Sigmoid colon (tissue), 7 donors: ENCODE measurements at regions of chr5 and their contacts with region 1.

Region 1: GRCh38 chr5:173887610-173888472 is at the start of gene CPEB4:
- DNase-seq: peak; percentile 100
- H3K4me3 ChIP-seq: peak within 1 kb of the TSS; percentile 72 to 97 (median 89)
- H3K27ac ChIP-seq: peak within 1 kb of the TSS; percentile 79 to 91 (median 86)
- H3K4me1 ChIP-seq: peaks cover 0 to 44% (median 24%) of the 10 kb centered on the region in 4 donors
- H3K27me3 ChIP-seq: no peaks in the 10 kb centered on the region
- CTCF ChIP-seq: no peak
- EP300 ChIP-seq: peak in 2 of 4 donors; percentile 24 to 42
- POLR2A ChIP-seq: peak; percentile 97 to 99
- total RNA-seq, gene CPEB4: 27.8 to 66.2 (median 32.0) TPM

Region 2: GRCh38 chr5:173315495-173316350 is 572.1 kb before region 1 on chr5:
- intact Hi-C with region 1: loop called (anchors 10 kb)
- DNase-seq: peak; percentile 86
- H3K4me3 ChIP-seq: peak overlapping the region in 3 of 4 donors; percentile 10 to 20 (median 11)
- H3K27ac ChIP-seq: peak overlapping the region; percentile 47 to 75 (median 57)
- H3K4me1 ChIP-seq: peaks cover 0 to 53% (median 48%) of the 10 kb centered on the region in 4 donors
- H3K27me3 ChIP-seq: no peaks in the 10 kb centered on the region
- CTCF ChIP-seq: no peak
- EP300 ChIP-seq: no peak
- POLR2A ChIP-seq: no peak

Region 3: DNA sequence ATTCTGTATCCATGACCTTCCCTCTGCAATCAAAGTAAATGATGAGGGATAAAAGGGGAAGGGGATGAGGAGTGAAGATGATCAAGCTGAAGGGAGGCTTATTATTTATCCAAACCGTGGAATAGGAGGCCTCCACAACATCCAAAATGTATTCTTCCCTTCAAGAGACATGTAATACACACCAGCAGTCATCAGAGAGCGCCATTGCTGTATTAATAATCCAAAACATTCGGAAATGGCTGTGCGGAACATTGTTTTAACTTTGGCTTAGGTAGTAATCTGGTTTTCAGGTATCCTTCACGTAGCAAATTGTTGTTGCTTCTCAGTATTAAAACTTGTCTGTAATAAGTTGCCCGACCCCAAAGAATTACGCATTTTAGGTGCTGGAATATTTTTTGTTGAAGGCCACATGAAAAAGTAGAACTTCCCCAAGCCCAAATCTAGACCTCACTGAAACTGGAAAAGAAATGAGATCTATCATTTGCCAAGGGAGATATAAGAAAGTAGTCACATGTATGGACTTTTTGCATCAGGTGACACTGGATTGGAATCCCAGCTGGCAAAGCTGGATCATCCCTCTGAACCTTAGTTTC is 268.8 kb before region 1 on chr5:
- intact Hi-C with region 1: loop called (anchors 2 kb)
- DNase-seq: no peak
- H3K4me3 ChIP-seq: no peak overlapping the region
- H3K27ac ChIP-seq: no peak overlapping the region
- H3K4me1 ChIP-seq: peaks cover 0 to 22% (median 22%) of the 10 kb centered on the region in 4 donors
- H3K27me3 ChIP-seq: no peaks in the 10 kb centered on the region
- CTCF ChIP-seq: peak; percentile 66 to 79 (median 68)
- EP300 ChIP-seq: no peak
- POLR2A ChIP-seq: no peak

Region 4: DNA sequence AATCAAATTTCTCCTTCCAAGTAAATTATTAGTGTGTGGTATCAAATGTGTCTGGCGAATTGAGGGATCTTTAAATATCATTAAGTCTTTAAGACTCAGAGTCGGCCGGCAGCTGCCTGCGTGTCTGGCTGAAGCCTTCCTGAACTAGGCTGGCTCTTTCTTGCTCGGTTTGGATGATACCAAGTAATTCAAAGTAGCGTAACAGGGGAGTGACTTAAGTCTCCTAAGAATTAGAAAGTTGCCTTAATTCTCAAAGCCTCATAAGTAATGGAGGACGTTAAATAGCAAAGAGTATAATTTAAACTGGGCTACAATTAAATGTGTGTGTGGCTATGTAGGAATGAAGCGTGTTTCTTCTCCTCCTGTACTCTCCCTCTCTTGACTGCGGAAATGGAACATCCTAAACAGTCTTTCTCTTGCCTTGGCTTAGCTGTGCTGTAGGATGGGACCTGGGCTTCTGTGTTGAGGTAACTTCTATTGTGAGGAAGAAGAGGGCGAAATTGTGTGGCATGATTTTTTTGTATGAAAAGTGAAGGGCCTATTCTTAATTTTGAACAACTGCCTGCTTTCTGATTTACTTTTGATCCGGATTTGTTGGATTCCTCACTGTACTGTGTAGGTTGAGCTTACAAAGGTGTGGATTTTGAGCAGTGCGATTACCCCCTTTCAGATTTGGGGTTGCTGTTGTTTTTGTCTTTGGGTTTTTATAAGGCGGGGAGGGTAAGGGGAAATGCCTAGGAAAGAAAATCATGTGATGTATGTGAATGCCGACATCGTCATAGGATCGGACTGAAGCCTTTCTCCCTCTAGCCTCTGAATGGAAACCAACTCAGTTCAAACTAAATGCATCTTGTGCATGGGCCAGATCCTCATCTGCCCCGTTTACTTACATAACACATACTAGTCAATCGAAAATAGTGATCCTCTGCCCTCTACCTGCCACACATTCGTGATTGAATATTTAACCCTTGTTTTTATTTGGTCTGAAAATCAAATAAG is 30.2 kb after region 1 on chr5:
- intact Hi-C with region 1: loop called (anchors 2 kb)
- DNase-seq: peak; percentile 79
- H3K4me3 ChIP-seq: peak overlapping the region; percentile 41 to 55 (median 51)
- H3K27ac ChIP-seq: peak overlapping the region; percentile 85 to 91 (median 88)
- H3K4me1 ChIP-seq: peaks cover 0 to 73% (median 48%) of the 10 kb centered on the region in 4 donors
- H3K27me3 ChIP-seq: no peaks in the 10 kb centered on the region
- CTCF ChIP-seq: no peak
- EP300 ChIP-seq: no peak
- POLR2A ChIP-seq: peak in 1 of 2 donors; percentile 62

Region 5: GRCh38 chr5:173954671-173955521 is 67.1 kb after region 1 on chr5:
- intact Hi-C with region 1: loop called (anchors 5 kb)
- DNase-seq: peak; percentile 74
- H3K4me3 ChIP-seq: no peak overlapping the region
- H3K27ac ChIP-seq: peak overlapping the region; percentile 62 to 85 (median 74)
- H3K4me1 ChIP-seq: peaks cover 0 to 22% (median 15%) of the 10 kb centered on the region in 4 donors
- H3K27me3 ChIP-seq: no peaks in the 10 kb centered on the region
- CTCF ChIP-seq: no peak
- EP300 ChIP-seq: peak; percentile 8 to 85 (median 72)
- POLR2A ChIP-seq: peak in 1 of 2 donors; percentile 9

Region 6: DNA sequence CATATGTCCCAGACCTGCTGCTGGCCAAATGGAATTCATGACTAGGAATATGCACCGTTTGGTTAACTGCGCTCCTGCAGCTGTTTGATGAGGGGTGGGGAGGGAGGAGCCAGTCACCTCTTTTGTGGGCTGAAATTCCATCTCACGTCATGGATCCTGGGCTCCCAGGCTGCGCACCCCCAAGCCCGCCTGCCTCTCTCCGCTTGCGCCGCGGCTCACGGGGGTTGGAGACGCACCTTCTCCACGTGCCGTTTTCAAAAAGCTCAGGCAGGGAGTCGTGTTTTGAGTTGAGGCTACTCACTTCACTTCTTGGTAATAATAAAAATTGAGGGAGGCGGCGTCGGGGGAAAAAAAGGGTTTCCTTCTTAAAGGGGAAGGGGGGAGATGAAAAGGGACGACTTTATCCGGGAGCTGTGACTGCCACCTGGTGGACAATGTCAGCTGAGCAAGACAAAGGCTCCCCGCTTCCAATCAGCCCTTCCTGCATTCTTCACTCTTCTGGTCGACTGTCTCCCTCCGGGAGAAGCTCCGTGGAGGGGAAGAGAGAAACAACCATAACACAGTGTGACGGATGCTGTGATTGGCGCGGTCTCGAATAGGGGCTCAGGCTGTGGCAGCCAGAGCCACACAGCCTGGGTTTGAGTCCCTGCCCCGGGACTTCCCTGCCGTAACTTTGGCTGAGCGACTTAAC is 85.2 kb after region 1 on chr5:
- intact Hi-C with region 1: loop called (anchors 2 kb)
- DNase-seq: peak; percentile 91
- H3K4me3 ChIP-seq: peak overlapping the region; percentile 18 to 51 (median 46)
- H3K27ac ChIP-seq: peak overlapping the region in 2 of 4 donors; percentile 15 to 38
- H3K4me1 ChIP-seq: peaks cover 0 to 11% (median 5%) of the 10 kb centered on the region in 4 donors
- H3K27me3 ChIP-seq: no peaks in the 10 kb centered on the region
- CTCF ChIP-seq: peak; percentile 78 to 93 (median 88)
- EP300 ChIP-seq: no peak
- POLR2A ChIP-seq: no peak